Thyroid gland (tissue), 4 donors: ENCODE measurements at regions of chr17 and their contacts with region 1.

Region 1: GRCh38 chr17:65495122-65496055 is 66.1 kb downstream of the AXIN2 start:
- DNase-seq: peak; percentile 80 to 81
- H3K4me3 ChIP-seq: no peak overlapping the region
- H3K27ac ChIP-seq: peak overlapping the region; percentile 20 to 44 (median 42)
- H3K4me1 ChIP-seq: peaks cover 10 to 12% of the 10 kb centered on the region in 2 donors
- H3K27me3 ChIP-seq: no peaks in the 10 kb centered on the region
- CTCF ChIP-seq: no peak
- POLR2A ChIP-seq: no peak

Region 2: GRCh38 chr17:65547253-65547670 is 51.9 kb after region 1 on chr17:
- intact Hi-C with region 1: loop called (anchors 10 kb)
- DNase-seq: peak; percentile 60 to 63
- H3K4me3 ChIP-seq: no peak overlapping the region
- H3K27ac ChIP-seq: peak overlapping the region; percentile 40 to 75 (median 73)
- H3K4me1 ChIP-seq: peaks cover 6 to 51% of the 10 kb centered on the region in 2 donors
- H3K27me3 ChIP-seq: no peaks in the 10 kb centered on the region
- CTCF ChIP-seq: no peak
- POLR2A ChIP-seq: no peak

Region 3: DNA sequence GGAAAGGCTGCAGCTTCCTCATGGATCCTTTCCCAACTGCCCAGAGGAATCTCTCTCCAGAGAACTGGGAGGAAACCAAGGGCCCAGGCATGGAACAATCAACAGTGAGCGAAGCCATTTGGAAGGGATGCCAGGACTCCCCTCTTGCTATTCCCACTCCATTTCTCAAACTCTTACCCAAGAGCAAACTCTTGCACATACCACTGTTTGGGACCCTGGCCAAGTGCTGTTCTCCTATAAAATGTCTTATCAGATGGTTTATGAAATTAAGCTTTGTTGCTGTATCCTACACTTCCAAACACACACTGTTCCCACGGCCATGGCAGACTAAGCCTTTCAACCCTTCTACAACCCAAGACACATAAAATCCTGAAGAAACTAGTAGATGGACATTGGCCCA is 114.4 kb after region 1 on chr17:
- intact Hi-C with region 1: no loop called
- DNase-seq: no peak
- H3K4me3 ChIP-seq: no peak overlapping the region
- H3K27ac ChIP-seq: no peak overlapping the region
- H3K4me1 ChIP-seq: no peaks in the 10 kb centered on the region
- H3K27me3 ChIP-seq: no peaks in the 10 kb centered on the region
- CTCF ChIP-seq: no peak
- POLR2A ChIP-seq: no peak